Heart right ventricle (tissue), 16 donors: ENCODE measurements at regions of chr10 and their contacts with region 1.

Region 1: GRCh38 chr10:102064868-102065560 is at the start of gene HPS6:
- DNase-seq: peak; percentile 90 to 93
- ATAC-seq: peak; percentile 97 to 98 (median 98)
- H3K4me3 ChIP-seq: peak within 1 kb of the TSS; percentile 49 to 96 (median 85)
- H3K27ac ChIP-seq: peak within 1 kb of the TSS; percentile 25 to 97 (median 93)
- H3K4me1 ChIP-seq: peaks cover 10 to 45% (median 33%) of the 10 kb centered on the region in 9 donors
- H3K27me3 ChIP-seq: no peaks in the 10 kb centered on the region
- CTCF ChIP-seq: peak in 7 of 9 donors; percentile 7 to 47 (median 28)
- total RNA-seq, gene HPS6: 8.2 to 13.6 (median 11.1) TPM

Region 2: GRCh38 chr10:101840741-101841453 is 224.1 kb before region 1 on chr10:
- intact Hi-C with region 1: loop called in 5 of 10 experiments (anchors 5 to 10 kb)
- DNase-seq: peak; percentile 80 to 84
- ATAC-seq: peak; percentile 70 to 92 (median 86)
- H3K4me3 ChIP-seq: peak overlapping the region in 9 of 10 donors; percentile 24 to 58 (median 43)
- H3K27ac ChIP-seq: peak overlapping the region in 2 of 10 donors; percentile 10 to 53
- H3K4me1 ChIP-seq: peaks cover 10 to 75% (median 45%) of the 10 kb centered on the region in 9 donors
- H3K27me3 ChIP-seq: no peaks in the 10 kb centered on the region
- CTCF ChIP-seq: peak; percentile 89 to 98 (median 90)